ENCODE measurements at regions of chr11 and their contacts with region 1.

Region 1: DNA sequence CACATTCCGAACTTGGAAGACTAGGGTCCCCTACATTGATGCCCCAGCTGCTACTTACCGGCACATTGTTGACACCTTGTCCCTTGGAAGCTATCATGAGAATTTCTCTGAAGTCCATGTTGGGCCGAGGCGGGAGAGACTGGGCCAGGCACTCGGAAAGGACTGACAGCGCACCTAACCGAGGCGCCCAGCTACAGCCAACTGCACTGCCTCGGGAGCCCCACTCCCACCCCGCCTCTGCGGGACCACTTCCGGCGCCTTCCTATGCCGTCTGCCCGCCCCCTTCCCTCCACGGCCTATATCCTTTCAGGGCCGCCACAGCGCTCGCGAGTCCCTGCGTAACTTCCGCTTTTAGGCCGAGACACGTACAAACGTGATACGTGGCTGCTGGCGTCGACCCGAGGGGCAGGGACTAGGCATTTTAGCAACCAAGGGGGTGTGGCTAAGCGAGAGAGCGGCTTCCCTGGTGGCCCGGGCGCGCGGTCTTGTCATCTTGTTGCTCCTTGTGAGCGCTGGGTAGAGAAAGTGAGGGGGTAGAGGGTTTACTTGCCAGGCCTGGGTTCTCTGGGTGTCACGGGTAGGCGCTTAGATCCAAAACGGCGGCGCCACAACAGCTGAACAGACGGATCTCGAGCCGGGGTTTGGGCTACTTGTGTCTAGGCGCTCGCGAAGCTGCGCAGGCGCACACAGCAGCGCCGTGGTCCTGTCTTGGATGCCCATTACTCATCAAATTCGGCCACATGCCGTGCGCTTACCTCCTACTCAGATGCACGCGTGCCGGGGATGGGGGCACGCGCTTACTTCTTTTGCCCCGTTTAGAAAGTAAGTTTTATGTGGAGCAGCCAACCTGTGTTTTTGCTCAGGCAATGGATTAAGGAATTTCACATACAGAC is at the start of gene SPTY2D1:
- DNase-seq: peak; percentile 99 to 100
- H3K4me3 ChIP-seq: peak within 1 kb of the TSS; percentile 81 to 82
- H3K27ac ChIP-seq: peak within 1 kb of the TSS; percentile 92 to 95
- H3K4me1 ChIP-seq: peaks cover 0 to 11% of the 10 kb centered on the region in 2 donors
- H3K27me3 ChIP-seq: no peaks in the 10 kb centered on the region
- CTCF ChIP-seq: peak in 2 of 4 experiments; percentile 20 to 41
- POLR2A ChIP-seq: peak; percentile 89 to 90
- total RNA-seq, gene SPTY2D1: 12.6 to 32.8 (median 23.2) TPM

Region 2: DNA sequence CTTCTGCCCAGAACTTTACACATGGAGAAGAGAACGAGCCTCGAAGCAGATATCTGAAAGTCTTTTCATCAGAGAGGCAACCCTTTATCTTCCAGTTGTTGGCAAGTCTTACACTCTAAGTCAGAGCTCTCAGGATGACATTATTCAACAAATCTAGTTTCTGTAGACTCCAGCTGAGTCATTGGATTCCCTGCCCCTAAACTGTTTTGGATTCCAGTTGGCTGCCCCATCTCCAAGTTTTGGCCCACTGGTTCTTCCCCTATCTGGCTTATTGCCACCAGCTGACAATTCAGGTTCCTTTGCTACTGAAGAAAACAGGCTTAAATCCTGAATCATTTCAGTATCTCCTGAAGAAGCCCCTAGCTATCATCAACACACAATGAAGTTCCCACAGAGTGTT is 542.7 kb before region 1 on chr11:
- intact Hi-C with region 1: no loop called
- DNase-seq: no peak
- H3K4me3 ChIP-seq: no peak overlapping the region
- H3K27ac ChIP-seq: no peak overlapping the region
- H3K4me1 ChIP-seq: no peaks in the 10 kb centered on the region
- H3K27me3 ChIP-seq: no peaks in the 10 kb centered on the region
- CTCF ChIP-seq: no peak
- POLR2A ChIP-seq: no peak

Region 3: DNA sequence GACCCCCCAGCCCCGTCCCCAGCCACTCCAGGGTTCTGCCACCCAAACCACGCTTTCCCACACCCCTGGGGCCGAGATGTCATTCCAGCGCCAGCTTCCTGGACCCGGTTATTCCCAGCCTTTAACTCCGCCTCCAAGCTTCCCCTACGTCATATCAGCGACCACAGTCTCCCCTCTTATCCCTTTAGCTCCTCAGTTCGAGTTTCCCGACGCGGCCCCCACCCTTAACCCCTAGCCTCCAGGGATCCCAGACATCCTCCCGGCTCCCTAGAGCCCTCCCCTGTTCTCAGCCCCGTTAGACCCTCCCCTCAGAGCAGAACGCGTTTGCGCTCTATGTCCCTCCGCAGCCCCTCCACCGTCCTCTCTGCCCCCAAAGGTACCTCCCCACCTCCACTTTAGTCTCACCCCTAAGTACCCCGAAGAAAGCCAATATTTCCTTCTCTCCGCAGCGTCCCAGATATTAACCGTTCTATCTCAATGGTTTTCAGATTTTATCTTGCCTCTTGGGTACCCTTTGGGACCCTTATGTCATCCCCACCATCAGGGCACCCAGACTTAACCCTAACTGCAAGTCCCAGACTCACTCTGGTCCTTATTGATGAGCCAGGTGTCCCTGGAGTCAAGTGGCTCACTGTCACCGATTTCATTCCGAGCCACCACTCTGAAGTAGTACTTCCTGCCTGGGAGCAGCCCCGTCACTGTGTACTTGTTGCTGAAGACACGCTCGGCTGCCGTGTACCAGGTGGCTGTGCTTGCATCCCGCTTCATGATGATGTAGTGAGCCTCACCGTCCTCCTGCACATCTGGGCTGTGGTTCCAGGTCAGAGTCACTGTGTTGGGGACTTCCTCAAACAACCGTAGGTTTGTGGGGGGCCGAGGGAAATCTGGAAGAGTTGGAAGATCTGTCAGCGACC is 72.2 kb after region 1 on chr11:
- intact Hi-C with region 1: loop called (anchors 10 kb)
- DNase-seq: peak; percentile 74 to 76
- H3K4me3 ChIP-seq: peak overlapping the region; percentile 45 to 61
- H3K27ac ChIP-seq: peak overlapping the region; percentile 77 to 83
- H3K4me1 ChIP-seq: no peaks in the 10 kb centered on the region
- H3K27me3 ChIP-seq: no peaks in the 10 kb centered on the region
- CTCF ChIP-seq: no peak
- POLR2A ChIP-seq: no peak